ENCODE measurements at regions of chr22 and their contacts with region 1.

Region 1: DNA sequence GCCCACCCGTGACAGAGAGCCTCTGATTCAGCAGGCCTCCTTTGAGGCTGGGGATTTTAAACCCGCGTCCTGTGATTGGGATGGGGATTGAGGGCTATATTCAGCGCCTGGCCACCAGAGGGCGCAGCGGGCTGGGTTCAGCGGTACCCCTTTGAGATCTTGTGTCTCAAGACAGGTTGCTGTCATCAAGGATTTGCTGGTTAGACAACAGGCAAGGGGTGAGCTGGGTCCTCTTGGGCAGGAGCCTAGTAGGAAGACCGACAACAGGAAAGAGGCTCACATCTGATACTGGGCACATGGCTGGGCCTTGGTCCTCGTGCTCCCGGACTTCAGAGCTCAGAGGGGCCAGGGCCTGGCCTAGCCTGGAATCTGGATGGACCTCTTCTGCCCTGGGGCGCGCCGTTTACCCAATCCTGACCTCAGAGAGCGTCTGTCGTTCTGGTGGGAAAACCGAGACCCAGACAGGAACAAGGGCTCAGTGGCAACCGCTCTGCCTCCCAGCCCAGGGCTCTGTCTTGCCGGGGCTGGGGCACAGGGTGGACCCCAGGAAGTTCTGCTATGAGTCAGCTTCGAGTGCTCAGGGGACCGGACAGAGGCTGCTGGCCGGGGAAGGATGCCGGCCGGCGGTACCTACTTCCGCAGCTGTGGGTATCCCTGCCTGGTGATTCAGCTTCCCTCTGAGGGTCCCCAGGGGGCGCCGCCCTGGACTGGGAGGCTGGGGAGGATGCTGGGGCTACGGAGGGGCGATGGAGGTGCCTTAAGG is 929 bp upstream of the SLC35E4 start:
- DNase-seq: peak; percentile 54
- H3K4me3 ChIP-seq: peak overlapping the region; percentile 42
- CTCF ChIP-seq: peak; percentile 92

Region 2: DNA sequence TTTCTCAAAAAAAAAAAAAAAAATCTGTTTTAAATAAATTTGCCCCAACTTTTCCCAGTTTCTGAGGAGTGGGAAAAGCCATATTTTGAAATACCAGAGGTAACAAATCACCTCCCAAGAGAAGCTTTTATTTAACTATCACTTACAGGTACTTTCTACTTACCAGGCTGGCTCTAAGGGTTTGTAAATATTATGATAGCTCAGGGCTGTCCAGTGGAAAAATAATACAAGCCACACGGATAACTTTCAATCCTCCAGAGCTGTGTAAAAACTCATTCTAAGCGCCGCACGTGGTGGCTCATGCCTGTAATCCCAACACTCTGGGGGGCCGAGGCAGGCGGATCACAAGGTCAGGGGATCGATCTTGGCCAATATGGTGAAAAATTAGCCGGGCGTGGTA is 123.5 kb before region 1 on chr22:
- CTCF ChIA-PET with region 1: no interaction called
- POLR2A ChIA-PET with region 1: no interaction called
- DNase-seq: no peak
- H3K4me3 ChIP-seq: no peak overlapping the region
- CTCF ChIP-seq: no peak

Region 3: DNA sequence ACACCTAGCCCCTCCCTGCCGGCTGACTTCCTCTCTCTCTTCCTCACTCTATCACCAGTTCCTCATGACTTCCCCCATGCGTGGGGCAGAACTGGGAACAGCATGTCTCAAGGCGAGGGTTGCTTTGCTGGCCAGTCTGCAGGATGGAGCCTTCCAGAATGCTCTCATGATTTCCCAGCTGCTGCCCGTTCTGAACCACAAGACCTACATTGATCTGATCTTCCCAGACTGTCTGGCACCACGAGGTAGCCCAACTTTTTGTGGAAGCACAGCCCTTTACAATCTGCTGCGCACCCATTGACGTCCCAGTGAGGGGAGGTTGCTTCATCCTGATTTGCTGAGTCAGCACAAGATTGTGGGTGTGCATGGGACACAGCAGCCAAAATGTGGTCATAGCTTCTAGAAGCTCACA is 19.1 kb before region 1 on chr22:
- CTCF ChIA-PET with region 1: interaction called, 61 read pairs
- POLR2A ChIA-PET with region 1: no interaction called
- DNase-seq: no peak
- H3K4me3 ChIP-seq: no peak overlapping the region
- CTCF ChIP-seq: no peak

Region 4: GRCh38 chr22:30662040-30662439 is 27.4 kb after region 1 on chr22:
- CTCF ChIA-PET with region 1: interaction called, 16 read pairs
- POLR2A ChIA-PET with region 1: no interaction called
- DNase-seq: no peak
- H3K4me3 ChIP-seq: no peak overlapping the region
- CTCF ChIP-seq: no peak

Region 5: DNA sequence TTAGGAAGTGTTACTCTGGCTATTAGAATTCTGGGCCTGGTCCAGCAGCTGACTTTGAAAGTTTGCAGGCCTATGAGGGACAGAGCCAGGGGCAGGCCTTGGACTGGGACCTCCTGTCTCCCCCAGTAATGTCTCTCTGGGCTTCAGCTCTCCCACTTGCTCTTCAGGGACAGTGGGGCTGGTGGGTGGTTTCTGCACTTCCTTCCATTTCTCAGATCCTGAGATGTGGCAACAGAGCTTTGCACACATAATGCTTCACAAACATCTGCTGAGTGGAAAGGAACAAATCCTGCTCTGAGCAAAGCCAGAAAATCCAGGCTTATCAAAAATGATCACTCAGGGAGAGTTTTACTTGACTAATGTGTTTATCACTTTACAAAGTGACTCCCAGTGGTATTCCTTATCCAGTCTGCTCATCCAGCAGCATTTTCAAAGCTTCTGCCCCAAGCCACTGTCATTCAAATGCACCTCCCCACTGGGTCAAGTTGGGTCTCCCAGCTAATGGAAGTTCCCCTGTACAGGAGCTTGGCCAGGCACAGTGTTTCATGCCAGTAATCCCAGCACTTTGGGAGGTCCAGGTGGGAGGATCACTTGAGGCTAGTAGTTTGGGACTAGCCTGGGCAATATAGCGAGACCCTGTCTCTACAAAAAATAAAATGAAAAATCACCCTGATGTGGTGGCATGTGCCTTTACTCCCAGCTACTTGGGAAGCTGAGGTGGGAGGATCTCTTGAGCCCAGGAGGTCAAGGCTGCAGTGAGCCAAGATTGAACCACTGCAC is 46.5 kb after region 1 on chr22:
- CTCF ChIA-PET with region 1: interaction called, 12 read pairs
- POLR2A ChIA-PET with region 1: no interaction called
- DNase-seq: no peak
- H3K4me3 ChIP-seq: no peak overlapping the region
- CTCF ChIP-seq: no peak

Region 6: DNA sequence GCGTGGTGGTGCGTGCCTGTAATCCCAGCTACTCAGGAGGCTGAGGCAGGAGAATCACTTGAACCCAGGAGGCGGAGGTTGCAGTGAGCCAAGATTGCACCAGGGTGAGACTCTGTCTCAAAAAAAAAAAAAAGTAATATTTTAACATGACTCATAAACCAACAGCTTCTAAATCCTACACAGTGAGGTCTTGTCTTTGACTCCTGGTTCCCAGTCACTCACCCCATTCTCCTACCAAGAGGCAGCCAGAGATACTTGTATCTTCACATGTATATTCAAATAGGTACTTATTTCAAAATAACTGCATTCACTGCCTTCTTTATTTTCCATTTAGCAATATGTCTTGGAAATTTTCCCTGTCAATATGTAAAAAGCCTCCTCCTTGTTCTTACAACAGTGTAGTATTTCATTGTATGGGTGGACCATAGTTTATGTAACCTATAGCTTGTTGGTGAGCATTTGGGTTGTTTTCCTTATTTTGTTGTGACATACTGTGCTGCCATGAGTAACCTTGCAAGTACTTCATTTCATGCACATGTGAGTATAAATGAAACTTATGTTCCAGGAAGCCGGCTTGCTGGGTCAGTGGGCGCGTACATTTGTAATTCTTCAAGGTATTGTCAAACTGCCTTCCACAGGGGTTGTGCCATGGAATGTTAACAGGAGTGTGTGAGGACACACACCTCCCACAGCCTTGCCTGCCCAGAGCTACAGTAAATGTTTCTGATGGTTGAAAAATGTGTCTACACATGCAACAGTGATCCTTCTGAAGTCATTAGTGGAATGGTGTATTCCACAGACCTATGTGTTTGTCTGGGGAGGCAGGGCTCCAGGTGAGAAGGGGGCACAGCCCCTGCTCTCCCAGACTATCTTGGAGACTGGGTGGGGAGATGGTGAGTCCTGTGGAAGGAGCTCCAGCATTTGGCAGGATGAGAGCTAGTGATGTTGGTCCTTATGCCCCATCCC is 107.9 kb after region 1 on chr22:
- CTCF ChIA-PET with region 1: interaction called, 33 read pairs
- POLR2A ChIA-PET with region 1: interaction called, 3 read pairs
- DNase-seq: no peak
- H3K4me3 ChIP-seq: no peak overlapping the region
- CTCF ChIP-seq: no peak